AG04449 (cell line): ENCODE measurements at regions of chr7 and their contacts with region 1.

Region 1: DNA sequence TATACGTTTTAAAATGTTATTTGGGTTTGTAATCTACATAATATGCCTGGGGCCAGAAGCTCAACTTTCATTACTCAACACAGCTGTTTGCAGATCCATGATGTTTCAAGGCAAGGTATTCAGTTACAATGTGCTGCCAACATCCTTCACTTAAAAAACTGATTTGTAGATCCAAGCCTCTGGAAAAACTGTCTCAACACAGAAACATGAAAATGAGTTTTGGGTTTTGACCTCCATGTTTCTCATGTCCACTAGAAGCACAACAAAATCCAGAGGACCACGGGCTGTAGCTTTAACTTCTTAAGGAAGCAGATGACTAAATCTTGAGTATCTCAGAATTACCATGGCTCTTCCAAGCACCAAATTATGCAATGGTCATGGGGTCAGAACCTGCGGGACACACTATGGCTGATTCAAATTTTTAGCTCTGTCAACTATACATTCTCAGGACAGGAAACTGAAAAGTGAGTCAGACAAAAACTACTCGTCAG is 247.1 kb upstream of the GRB10 start:
- DNase-seq: peak; percentile 84
- H3K4me3 ChIP-seq: no peak overlapping the region
- CTCF ChIP-seq: no peak

Region 2: DNA sequence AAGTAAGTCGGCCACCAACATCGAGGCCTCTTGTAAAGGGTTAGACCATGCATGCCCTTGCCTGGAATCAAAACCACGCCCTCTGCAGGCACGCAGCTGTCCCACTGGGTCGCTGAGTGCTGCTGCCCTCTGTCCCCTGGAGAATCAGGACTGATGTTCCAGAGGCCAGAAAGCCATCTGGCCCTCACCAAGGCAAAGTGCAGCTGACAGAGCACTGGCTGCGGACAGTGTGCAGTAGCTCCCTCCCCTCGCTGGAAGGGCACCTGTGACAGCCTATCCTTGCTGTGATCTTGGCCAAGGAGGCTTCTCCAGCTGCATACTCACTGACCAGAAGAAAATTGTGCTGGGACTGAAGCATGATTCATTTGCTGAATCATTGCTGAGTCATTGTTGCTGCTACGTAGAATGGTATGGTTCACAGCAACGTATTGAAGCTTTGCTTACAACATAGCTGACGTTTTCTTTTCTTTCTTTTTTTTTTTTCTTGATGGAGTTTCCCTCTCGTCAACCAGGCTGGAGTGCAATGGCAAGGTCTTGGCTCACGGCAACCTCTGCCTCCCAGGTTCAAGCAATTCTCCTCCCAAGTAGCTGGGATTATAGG is 495.0 kb before region 1 on chr7:
- CTCF ChIA-PET with region 1: no interaction called
- POLR2A ChIA-PET with region 1: no interaction called
- DNase-seq: peak; percentile 96
- H3K4me3 ChIP-seq: no peak overlapping the region
- CTCF ChIP-seq: no peak

Region 3: DNA sequence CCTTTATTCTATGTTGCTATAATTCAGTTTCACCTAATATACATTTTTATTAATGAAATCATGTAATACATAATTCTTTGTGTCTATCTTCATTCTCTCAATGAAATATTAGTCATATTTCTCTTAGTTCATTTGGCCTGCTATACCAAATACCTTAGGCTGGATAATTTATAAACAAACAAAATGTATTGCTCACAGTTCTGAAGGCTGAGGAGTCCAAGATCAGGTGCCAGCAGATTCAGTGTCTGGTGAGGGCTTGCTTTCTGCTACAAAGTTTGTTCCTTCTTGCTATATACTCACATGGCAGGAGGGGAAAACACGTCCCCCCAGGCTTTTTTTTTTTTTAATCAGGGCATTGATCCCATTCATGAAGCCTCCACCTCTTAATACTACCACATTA is 103.7 kb before region 1 on chr7:
- CTCF ChIA-PET with region 1: no interaction called
- POLR2A ChIA-PET with region 1: no interaction called
- DNase-seq: no peak
- H3K4me3 ChIP-seq: no peak overlapping the region
- CTCF ChIP-seq: no peak

Region 4: DNA sequence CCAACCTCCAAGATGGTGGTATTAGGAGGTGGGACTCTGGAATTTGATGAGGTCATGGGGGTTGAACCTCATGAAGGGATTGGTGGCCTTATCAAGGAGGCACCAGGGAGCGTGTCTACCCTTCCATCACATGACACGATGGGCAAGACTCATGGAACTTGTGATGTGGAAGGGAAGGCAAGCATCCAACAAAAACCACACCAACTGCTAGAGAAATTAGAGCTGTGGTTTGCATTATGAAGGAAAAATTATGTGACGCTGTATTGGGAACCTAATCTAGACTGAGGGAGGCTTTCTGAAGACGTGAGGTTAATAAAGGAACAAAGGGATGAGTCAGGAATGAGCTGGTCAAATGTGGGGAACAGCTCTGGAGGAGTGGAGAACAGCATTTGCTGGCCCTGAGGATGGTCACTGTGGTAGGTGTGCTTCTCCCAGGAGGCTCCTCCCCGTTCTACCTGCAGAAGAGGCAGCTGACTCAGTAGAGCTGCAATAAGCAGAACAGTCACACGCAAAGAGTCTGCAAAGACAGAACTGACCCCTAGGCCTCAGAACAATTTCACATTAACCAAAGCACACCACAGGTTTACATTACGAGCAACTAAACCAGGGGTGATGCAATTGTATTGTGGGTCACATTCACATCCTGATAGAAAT is 10.4 kb before region 1 on chr7:
- CTCF ChIA-PET with region 1: interaction called, 4 read pairs
- POLR2A ChIA-PET with region 1: interaction called, 11 read pairs
- DNase-seq: no peak
- H3K4me3 ChIP-seq: no peak overlapping the region
- CTCF ChIP-seq: no peak

Region 5: DNA sequence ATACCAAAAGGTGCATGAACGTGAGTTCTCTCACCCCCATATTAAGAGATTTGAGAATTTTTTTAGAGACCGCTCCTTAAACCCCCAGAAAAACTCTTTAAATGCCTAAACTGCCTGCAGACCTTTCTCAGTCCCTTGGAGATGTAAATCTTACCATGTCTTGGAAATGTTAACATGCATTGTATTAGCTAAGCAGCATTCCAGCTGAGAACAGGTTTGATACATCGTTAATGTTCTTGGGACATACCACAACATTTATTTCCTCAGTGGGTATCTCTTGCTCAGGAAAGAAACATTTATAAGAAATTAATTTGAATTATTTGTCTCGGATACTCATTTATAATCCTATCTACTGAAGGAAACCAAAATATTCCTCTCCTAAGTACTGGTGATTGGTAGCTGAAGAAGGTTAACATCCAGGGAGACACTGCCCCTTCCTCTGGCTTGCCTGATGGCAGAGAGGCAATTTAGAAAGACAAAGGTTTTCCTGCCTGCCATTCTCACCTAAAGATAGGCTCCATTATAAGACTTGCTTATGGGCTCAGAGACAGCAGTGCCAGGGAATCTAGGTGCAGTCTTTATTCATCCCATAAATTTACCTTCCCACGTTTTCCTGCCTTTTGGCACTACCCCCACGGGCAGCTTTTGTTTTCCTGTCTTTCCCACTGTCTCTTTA is 145.7 kb after region 1 on chr7:
- CTCF ChIA-PET with region 1: no interaction called
- POLR2A ChIA-PET with region 1: no interaction called
- DNase-seq: no peak
- H3K4me3 ChIP-seq: no peak overlapping the region
- CTCF ChIP-seq: no peak

Region 6: GRCh38 chr7:51757960-51758359 is 728.2 kb after region 1 on chr7:
- CTCF ChIA-PET with region 1: no interaction called
- POLR2A ChIA-PET with region 1: no interaction called
- DNase-seq: no peak
- H3K4me3 ChIP-seq: no peak overlapping the region
- CTCF ChIP-seq: no peak